Left colon (tissue), 2 donors: ENCODE measurements at regions of chr17 and their contacts with region 1.

Region 1: GRCh38 chr17:45385331-45385997 is 47.2 kb downstream of the ARHGAP27 start:
- DNase-seq: peak; percentile 78 to 93
- ATAC-seq: peak; percentile 91

Region 2: DNA sequence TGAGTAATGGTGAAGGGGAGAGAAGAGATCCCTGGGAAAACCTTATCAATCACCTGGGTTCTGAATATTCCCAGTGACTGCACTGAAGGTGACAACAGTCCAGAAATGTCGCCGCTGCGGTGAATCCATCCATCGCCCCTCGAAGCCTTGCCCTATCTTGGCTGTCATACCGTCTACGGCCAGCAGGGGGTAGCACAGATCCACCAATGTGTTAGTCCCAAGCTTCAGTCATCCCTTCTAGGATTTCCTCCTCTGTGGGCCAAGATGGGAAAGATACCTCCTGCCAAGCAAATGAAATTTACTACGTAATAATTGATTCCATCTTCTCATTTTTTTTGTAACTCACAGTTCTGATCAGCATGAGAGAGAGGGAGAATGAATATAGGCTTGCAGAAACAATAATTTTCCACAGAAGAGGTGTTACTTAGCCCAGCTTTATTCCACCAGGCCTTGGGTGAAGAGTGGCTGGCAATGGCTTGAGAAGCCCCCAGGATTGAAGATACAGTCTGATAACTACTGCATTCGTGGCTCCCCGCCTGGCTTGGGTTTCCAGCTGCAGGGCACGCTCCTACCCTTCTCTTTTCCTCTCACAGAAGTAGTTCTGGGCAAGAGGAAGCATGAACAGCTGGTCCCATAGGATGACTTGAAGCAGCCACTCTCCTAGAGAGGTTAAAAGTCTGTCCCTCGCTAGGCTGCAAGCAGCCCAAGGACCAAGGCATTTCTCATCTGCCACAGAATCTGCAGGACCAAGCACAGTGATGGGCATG is 166.4 kb before region 1 on chr17:
- intact Hi-C with region 1: loop called (anchors 5 to 10 kb)
- DNase-seq: peak; percentile 64 to 93
- ATAC-seq: peak; percentile 84

Region 3: DNA sequence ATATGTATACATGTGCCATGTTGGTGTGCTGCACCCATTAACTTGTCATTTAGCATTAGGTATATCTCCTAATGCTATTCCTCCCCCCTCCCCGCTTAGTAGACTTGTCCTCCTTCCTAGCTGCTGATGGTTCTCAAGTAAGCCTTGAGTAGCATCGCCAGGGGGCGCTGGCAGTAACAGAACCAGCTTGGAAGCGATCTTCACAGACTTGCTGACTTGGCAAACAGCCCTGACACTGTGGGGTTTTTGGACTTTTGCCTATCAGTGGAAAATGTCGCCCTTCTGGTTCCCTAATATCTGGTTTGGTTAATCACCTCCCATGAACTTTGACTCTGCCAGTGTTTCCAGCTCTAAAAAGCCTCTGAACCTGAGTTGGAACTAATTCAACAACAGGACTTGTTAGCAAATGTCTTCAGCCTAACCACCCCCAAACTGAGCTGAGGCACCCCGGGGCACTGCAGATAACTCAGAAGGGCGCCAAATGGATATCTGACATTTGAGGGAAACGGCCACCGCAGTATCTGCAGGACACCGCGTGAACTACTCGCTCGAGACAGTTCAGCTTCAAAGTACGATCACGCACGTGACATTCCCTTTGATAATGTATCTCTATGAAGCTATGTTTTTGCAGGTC is 108.1 kb before region 1 on chr17:
- intact Hi-C with region 1: loop called (anchors 2 to 5 kb)
- DNase-seq: peak; percentile 88 to 99
- ATAC-seq: peak; percentile 82

Region 4: GRCh38 chr17:45332989-45333701 is 52.3 kb before region 1 on chr17:
- intact Hi-C with region 1: loop called in 1 of 2 experiments (anchors 10 kb)
- DNase-seq: peak in 1 of 2 donors; percentile 6
- ATAC-seq: peak; percentile 9

Region 5: DNA sequence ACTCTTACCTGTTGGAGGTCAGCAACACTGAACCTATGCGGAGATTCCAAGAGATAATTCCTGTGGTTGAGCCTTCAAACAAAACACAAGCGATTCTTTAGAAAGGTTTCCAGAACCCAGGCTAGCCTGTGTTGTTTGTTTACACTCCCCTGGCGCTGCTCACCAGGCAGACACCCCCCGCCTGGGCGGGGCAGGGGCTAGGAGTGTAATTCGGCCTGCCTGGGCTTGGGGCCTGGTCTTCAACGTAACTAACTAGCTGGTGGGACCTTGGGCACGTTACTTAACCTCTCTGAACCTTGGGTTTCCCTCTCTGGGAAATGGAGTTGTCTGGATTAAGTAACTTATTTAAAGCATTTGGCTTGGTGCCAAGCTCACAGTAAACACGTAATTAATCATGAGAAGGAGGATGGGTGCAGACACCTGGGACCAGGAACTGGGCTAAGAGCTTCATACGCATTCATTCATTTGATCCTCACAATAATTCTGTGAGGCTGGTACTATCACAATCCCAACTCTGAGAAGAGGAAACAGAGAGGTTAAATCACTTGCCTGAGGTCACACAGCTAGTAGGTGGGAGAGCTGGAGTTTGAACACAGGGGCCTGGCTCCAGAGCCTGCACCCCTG is 54.8 kb after region 1 on chr17:
- intact Hi-C with region 1: no loop called
- DNase-seq: peak; percentile 27 to 33
- ATAC-seq: peak; percentile 16